ENCODE measurements at regions of chr2 and their contacts with region 1.

Region 1: DNA sequence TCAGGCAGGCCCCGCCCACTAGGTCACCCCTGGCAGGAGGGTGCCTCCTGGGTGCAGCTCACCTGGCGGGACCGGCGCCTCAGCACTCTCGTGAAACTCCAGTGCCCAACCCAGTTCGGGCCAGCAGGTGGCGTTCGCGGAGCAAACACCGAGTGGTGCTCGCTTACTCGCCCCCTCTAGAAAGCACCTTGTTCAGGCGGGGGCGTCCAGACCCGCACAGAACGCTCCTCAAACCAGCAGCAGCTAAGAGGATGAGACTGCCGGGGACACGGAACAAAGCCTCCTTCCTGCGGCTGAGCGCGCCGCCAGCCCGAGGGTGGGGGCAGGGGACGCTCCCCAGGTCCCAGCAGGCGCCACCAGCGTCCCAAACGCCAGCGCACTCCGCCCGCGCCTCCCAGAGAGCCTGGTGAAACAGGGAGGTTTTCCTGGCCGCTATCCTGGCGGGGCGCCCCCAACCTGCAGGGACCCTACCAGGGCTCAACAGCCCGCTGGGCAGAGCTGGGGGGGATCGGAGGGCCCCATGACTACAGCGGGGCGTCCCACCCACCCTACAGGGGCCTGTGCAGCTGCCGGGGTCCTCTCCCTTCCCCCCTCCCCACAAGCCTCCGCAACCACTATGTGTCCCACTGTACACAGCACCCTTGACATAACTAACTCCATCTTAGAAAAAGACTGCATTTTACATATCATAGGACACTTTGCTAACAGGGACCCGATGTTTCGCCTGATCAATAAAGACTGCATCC is 44.7 kb downstream of the MRPS5 start:
- DNase-seq: peak; percentile 98
- ATAC-seq: peak; percentile 75
- H3K4me3 Mint-ChIP-seq: peak overlapping the region; percentile 80
- H3K27ac Mint-ChIP-seq: peak overlapping the region; percentile 93
- H3K4me1 Mint-ChIP-seq: peaks cover 65% of the 10 kb centered on the region
- H3K27me3 Mint-ChIP-seq: no peaks in the 10 kb centered on the region
- CTCF ChIP-seq: peak; percentile 90

Region 2: DNA sequence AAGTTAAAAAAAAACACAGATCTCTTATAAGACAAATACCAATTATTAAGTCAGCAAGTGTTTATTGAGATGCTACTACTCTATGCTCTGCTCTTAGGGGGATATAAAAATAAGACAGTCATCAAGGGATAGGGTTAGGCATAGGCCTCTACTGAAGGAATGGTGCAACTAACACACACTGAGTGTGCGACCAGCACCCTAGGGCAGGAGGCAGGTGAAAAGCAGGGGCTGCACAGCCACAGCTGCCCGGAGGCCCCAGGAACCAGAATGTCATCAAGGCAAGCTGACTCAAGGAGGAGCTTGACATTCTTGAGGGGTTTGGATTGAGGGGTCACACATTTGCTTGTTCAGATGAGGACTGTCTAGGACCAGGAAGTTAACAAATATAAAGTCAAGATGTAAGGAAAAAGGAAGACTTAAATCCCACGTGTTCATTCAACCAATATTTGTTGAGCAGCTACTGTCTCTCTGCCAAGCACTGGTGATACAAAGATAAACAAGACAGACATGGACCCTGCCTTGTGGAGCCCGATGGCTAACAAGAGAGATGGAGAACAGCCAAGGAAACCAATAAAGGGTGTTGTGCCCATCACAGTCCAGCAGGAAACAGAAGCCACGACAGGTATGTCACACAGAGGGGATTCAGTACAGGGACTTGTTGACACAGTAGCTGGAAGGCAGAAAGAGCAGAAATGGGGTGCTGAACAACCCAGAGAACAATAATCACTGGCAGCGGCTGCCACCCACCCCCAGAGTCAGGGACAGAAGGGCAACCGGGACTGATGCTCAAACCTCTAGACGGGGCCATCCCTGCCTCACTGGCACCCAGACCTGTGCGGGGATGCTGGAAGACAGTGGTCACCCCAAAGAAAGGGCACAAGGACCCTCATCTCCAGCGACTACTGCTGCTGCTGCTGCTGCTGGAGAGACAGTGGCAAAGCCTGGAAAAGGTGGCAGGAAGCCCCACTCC is 97.3 kb before region 1 on chr2:
- CTCF ChIA-PET with region 1: no interaction called
- POLR2A ChIA-PET with region 1: no interaction called
- intact Hi-C with region 1: no loop called
- DNase-seq: no peak
- ATAC-seq: no peak
- H3K4me3 Mint-ChIP-seq: no peak overlapping the region
- H3K27ac Mint-ChIP-seq: no peak overlapping the region
- H3K4me1 Mint-ChIP-seq: no peaks in the 10 kb centered on the region
- H3K27me3 Mint-ChIP-seq: peaks cover 11% of the 10 kb centered on the region
- CTCF ChIP-seq: no peak

Region 3: DNA sequence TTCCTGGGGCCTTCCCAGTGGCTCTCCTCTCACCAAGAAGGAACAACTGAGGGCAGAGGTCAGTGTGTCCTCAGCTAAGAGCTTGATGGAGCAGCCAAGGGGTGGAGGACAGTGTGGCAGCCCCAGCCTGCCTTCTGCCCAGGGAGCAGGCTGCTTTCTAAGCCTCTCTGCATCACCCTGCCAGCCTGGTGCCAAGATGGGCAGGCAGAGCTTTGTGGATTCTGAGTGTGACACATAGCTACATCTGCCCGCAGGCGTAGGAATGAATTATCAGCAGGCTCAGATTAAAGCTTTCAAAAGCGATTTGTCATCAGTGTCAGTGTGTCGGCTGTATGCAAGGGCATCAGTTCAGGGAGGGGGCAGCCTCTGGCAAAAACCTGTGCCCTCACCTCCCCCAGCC is 42.7 kb before region 1 on chr2:
- CTCF ChIA-PET with region 1: interaction called, 10 read pairs
- POLR2A ChIA-PET with region 1: interaction called, 4 read pairs
- intact Hi-C with region 1: no loop called
- DNase-seq: no peak
- ATAC-seq: peak; percentile 65
- H3K4me3 Mint-ChIP-seq: no peak overlapping the region
- H3K27ac Mint-ChIP-seq: no peak overlapping the region
- H3K4me1 Mint-ChIP-seq: peaks cover 76% of the 10 kb centered on the region
- H3K27me3 Mint-ChIP-seq: no peaks in the 10 kb centered on the region
- CTCF ChIP-seq: no peak

Region 4: DNA sequence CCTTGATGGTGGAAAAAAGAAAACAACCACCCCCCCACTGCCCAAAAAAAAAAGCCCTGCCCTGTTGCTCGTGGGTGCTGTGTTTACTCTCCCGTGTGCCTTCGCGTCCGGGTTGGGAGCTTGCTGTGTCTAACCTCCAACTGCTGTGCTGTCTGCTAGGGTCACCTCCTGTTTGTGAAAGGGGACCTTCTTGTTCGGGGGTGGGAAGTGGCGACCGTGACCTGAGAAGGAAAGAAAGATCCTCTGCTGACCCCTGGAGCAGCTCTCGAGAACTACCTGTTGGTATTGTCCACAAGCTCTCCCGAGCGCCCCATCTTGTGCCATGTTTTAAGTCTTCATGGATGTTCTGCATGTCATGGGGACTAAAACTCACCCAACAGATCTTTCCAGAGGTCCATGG is 23.4 kb before region 1 on chr2:
- CTCF ChIA-PET with region 1: interaction called, 131 read pairs
- POLR2A ChIA-PET with region 1: interaction called, 65 read pairs
- intact Hi-C with region 1: no loop called
- DNase-seq: peak; percentile 59
- ATAC-seq: no peak
- H3K4me3 Mint-ChIP-seq: no peak overlapping the region
- H3K27ac Mint-ChIP-seq: peak overlapping the region; percentile 85
- H3K4me1 Mint-ChIP-seq: peaks cover 70% of the 10 kb centered on the region
- H3K27me3 Mint-ChIP-seq: no peaks in the 10 kb centered on the region
- CTCF ChIP-seq: peak; percentile 11

Region 5: DNA sequence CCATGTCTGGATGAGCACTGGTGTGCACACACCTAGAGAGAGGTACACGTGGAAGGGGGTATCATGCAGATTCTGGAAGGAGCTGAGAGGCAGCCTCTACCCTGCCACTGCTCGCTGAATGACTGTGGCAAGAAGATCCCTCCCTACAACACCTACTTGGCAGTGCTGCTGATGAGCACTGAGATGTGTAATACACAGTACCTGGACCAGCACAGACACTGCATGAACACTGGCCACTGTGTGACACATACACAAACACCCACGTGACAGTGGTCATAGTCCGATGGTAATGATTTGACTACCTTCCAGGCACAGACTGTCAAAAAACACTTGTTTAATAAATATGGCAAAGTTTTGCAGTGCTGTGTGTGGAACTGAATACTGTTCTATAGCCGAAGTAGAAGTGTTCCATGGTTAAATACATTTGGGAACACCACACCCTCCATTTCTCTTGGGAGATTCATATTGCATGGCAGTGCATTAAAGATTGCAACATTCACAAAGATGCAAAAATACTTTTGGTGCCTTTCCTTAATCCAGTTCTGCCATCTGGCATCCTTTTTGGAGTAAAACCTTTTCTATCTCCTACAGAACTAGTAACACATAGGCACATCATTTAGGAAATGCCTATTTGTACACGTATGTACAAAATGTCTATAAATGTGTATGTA is 15.1 kb after region 1 on chr2:
- CTCF ChIA-PET with region 1: interaction called, 12 read pairs
- POLR2A ChIA-PET with region 1: no interaction called
- intact Hi-C with region 1: no loop called
- DNase-seq: no peak
- ATAC-seq: no peak
- H3K4me3 Mint-ChIP-seq: no peak overlapping the region
- H3K27ac Mint-ChIP-seq: no peak overlapping the region
- H3K4me1 Mint-ChIP-seq: peaks cover 27% of the 10 kb centered on the region
- H3K27me3 Mint-ChIP-seq: no peaks in the 10 kb centered on the region
- CTCF ChIP-seq: no peak

Region 6: DNA sequence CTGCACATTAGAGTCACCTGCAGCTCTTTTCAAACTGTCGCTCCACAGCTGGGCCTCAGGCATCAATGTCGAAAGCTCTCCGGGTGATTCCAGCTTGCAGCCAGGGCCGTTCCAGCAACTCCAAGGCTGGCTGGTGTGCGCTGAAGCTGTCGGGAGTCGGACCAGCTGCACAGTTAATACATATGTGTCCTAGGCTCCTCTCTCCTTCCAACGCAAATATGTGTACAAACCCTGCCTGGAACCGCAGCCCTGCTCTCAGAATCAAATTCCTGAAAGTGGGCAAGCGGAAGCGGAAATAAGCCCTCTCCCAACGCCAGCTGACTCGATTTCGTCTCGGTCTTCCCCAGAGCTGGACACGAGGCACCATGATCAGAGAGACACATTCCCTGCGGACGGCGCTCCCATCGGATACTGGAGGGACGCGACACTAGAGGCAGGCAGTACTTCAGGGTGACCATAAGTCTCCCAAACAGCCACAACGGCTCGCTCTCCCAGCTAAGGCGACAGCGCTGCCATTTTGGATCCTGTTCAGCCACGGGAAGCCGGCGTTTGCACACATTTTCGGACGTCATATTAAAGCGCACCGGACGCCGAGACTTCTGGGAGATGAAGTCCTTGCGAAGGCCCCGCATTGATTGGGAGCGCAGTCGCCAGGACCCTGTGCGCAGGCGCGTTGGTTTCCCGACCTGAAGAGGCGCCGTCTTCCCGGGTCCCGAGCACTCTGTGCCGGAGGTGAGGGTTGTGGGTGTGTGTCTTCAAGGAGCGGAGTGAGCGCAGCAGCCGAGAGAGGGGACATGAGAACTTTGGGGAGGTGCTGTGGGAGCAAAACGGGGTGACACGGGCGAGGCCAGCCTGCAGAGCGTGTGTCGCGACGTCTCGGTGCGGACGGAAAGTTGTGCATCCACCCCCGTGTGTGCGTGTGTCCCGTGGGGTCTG is 88.4 kb after region 1 on chr2 and contains the start of gene ZNF2:
- CTCF ChIA-PET with region 1: interaction called, 10 read pairs
- POLR2A ChIA-PET with region 1: interaction called, 8 read pairs
- intact Hi-C with region 1: loop called (anchors 10 kb)
- DNase-seq: peak; percentile 98
- ATAC-seq: peak; percentile 94
- H3K4me3 Mint-ChIP-seq: peak within 1 kb of the TSS; percentile 100
- H3K27ac Mint-ChIP-seq: peak within 1 kb of the TSS; percentile 96
- H3K4me1 Mint-ChIP-seq: peaks cover 25% of the 10 kb centered on the region
- H3K27me3 Mint-ChIP-seq: no peaks in the 10 kb centered on the region
- CTCF ChIP-seq: no peak
- total RNA-seq, gene ZNF2: 5.7 to 6.5 TPM